OCI-LY7 (cell line): ENCODE measurements at regions of chr3 and their contacts with region 1.

Region 1: DNA sequence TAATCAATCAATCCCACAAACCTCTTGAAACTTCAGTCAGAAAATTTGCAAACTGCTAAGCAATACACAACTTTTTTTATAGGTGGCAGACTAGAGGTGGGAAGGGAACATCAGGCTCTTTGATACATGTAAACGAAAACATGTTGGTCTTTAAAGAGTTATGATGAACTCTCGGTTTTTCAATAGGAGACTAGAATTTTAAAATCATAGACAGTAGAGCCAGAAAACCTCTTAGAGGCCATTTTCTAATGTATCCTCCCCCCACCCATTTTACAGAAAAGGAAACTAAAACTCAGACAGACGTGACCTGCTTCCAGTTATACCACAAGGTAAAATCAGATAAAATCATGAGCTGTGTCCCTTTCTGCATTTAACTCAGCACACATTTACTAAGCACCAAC is 179.1 kb upstream of the LPP start:
- DNase-seq: peak; percentile 79
- H3K4me3 ChIP-seq: peak overlapping the region; percentile 54
- H3K27ac ChIP-seq: peak overlapping the region; percentile 99
- H3K4me1 ChIP-seq: peaks cover 100% of the 10 kb centered on the region
- CTCF ChIP-seq: peak; percentile 84

Region 2: GRCh38 chr3:187738331-187739093 is 236.4 kb before region 1 on chr3:
- CTCF ChIA-PET with region 1: interaction called, 3 read pairs
- POLR2A ChIA-PET with region 1: interaction called, 531 read pairs
- intact Hi-C with region 1: loop called (anchors 2 kb)
- DNase-seq: peak; percentile 76
- H3K4me3 ChIP-seq: peak overlapping the region; percentile 86
- H3K27ac ChIP-seq: peak overlapping the region; percentile 90
- H3K4me1 ChIP-seq: peaks cover 60% of the 10 kb centered on the region
- CTCF ChIP-seq: peak; percentile 86

Region 3: GRCh38 chr3:187955076-187955952 is 19.6 kb before region 1 on chr3:
- CTCF ChIA-PET with region 1: interaction called, 4 read pairs
- POLR2A ChIA-PET with region 1: interaction called, 1,356 read pairs
- intact Hi-C with region 1: loop called (anchors 2 kb)
- DNase-seq: no peak
- H3K4me3 ChIP-seq: no peak overlapping the region
- H3K27ac ChIP-seq: peak overlapping the region; percentile 99
- H3K4me1 ChIP-seq: peaks cover 100% of the 10 kb centered on the region
- CTCF ChIP-seq: 0 out of 2 replicates have a peak, but pooled peaks have one; percentile 21

Region 4: GRCh38 chr3:188052169-188053030 is 77.5 kb after region 1 on chr3:
- CTCF ChIA-PET with region 1: interaction called, 3 read pairs
- POLR2A ChIA-PET with region 1: interaction called, 22 read pairs
- intact Hi-C with region 1: no loop called
- DNase-seq: no peak
- H3K4me3 ChIP-seq: no peak overlapping the region
- H3K27ac ChIP-seq: no peak overlapping the region
- H3K4me1 ChIP-seq: peaks cover 69% of the 10 kb centered on the region
- CTCF ChIP-seq: peak; percentile 34; the same call in 1 of the 2 replicates

Region 5: DNA sequence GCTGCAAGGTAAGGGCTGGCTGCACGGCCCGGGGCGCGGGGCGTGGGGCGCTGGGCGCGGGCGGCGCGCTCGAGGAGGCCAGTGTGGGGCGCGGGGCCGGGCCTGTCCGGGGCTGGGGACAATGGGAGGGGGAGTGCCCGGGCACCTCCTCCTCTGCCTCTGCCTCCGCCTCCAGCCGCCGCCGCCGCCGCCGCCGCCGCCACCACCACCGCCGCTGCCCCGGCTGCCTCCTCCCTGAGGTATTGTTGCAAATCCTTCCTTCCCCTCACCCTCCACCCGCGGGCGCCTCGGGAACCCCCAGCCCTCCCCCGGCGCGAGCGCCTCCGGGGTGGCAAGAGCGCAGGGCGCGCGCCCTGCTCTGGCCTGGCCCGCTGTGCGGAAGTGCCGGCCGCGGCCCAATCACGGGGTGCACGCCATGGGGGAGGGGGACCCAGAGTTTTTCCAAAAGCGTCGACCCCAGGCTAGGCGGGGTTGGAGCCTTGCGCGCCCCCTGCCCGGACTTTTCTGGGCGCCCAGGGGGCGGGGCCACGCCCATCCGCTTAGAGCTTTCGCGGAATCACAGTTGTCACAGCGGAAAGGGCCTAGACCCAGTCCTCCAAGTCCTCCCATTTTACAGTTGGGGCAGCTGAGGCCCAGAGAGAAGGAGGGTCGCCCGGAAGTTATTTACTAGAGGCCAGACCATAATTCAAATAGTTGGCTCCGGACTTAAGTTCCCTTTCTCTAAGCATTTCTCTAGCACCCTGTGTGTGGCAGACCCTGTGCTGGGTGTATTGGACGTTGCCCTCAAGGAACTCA is 179.3 kb after region 1 on chr3 and contains the start of gene LPP:
- CTCF ChIA-PET with region 1: no interaction called
- POLR2A ChIA-PET with region 1: interaction called, 4 read pairs
- intact Hi-C with region 1: loop called (anchors 1 kb)
- DNase-seq: peak; percentile 79
- H3K4me3 ChIP-seq: peak within 1 kb of the TSS; percentile 82
- H3K27ac ChIP-seq: peak within 1 kb of the TSS; percentile 41
- H3K4me1 ChIP-seq: peaks cover 35% of the 10 kb centered on the region
- CTCF ChIP-seq: no peak; the same call in 1 of the 2 replicates
- total RNA-seq, gene LPP: 7.4 and 10.9 TPM in 2 replicates

Region 6: GRCh38 chr3:188400494-188401243 is 425.8 kb after region 1 on chr3:
- CTCF ChIA-PET with region 1: no interaction called
- POLR2A ChIA-PET with region 1: no interaction called
- intact Hi-C with region 1: loop called (anchors 5 kb)
- DNase-seq: peak; percentile 78
- H3K4me3 ChIP-seq: no peak overlapping the region
- H3K27ac ChIP-seq: peak overlapping the region; percentile 48
- H3K4me1 ChIP-seq: peaks cover 46% of the 10 kb centered on the region
- CTCF ChIP-seq: no peak

Region 7: DNA sequence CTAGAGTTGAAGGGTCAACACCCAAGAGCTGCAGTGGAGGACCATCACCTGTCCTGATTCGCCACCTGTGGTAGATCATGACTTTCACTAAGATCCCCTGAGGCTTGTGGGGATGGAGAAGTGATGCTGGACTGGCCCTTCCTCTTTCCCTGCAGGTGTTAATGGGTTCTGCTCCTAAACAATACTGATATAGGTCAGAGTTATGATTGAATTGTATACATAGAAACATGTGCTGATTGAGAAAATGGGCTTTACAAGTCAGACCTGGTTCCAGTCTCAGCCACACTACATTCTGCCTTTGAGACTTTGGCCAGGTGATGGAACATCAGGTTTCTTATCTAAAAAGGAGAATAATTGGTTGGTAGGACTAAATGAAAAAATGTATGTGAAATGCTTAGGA is 778.0 kb after region 1 on chr3:
- CTCF ChIA-PET with region 1: no interaction called
- POLR2A ChIA-PET with region 1: no interaction called
- intact Hi-C with region 1: loop called (anchors 2 kb)
- DNase-seq: peak; percentile 76
- H3K4me3 ChIP-seq: peak overlapping the region; percentile 54
- H3K27ac ChIP-seq: peak overlapping the region; percentile 89
- H3K4me1 ChIP-seq: peaks cover 68% of the 10 kb centered on the region
- CTCF ChIP-seq: no peak